ENCODE measurements at regions of chr2 and their contacts with region 1.

Region 1: GRCh38 chr2:216195565-216196029 is 86.4 kb downstream of the XRCC5 start:
- DNase-seq: no peak
- H3K4me3 Mint-ChIP-seq: peak overlapping the region; percentile 32
- H3K27ac Mint-ChIP-seq: peak overlapping the region; percentile 91
- H3K4me1 Mint-ChIP-seq: peaks cover 40% of the 10 kb centered on the region
- H3K27me3 Mint-ChIP-seq: no peaks in the 10 kb centered on the region

Region 2: DNA sequence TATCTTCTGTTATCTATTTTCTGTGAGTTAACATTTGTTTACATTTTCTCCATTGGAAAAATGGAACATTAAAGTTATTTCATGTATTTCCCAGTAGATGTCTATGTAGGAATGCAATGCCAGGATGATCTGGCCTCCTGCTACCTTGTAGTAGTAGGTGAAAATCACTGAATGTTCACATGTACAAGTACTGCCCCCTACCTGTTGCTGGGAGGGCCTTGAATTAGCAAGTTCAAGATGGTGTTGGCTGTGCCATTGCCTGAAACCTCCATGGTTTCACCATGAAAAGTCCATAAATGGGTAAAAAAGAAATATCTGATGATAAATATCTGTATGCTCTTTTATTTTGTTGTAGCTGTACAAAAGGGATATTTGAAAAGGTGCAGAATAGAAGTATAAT is 55.7 kb before region 1 on chr2:
- intact Hi-C with region 1: loop called (anchors 5 kb)
- DNase-seq: peak; percentile 80
- H3K4me3 Mint-ChIP-seq: no peak overlapping the region
- H3K27ac Mint-ChIP-seq: peak overlapping the region; percentile 46
- H3K4me1 Mint-ChIP-seq: peaks cover 31% of the 10 kb centered on the region
- H3K27me3 Mint-ChIP-seq: no peaks in the 10 kb centered on the region

Region 3: DNA sequence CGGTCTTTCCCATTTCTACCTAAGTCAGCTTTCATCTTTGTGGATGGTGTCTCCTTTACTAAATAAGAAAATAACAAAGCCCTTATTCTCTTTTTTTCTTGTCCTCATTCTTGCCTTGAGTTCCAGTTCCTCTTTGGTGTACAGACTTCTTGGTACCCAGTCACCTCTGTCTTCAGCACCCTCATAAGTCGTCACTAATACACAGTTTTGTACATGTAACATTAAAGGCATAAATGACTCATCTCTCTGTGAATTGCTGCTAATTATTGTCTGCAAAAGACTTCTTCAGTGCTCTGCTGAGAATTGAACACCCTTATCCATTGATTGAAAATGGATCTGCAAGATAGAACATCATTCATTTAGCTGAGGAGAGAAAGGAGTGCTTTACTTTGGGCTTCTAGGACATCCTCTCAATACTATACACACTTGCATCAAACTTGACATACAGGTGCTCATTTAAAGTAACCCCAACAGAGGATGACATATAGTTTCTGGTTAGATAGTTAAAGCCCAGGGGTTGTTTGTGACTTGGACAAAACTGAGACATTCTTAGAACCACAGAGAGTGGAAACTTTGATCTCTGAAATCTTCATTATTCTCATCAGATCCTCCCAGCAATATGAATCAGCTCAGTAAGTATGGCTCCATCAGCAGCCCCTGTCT is 10.6 kb after region 1 on chr2:
- intact Hi-C with region 1: loop called (anchors 1 kb)
- DNase-seq: peak; percentile 50
- H3K4me3 Mint-ChIP-seq: peak overlapping the region; percentile 32
- H3K27ac Mint-ChIP-seq: peak overlapping the region; percentile 89
- H3K4me1 Mint-ChIP-seq: peaks cover 44% of the 10 kb centered on the region
- H3K27me3 Mint-ChIP-seq: no peaks in the 10 kb centered on the region

Measured in activated CD4-positive, alpha-beta T cell treated with anti-CD3 and anti-CD28 coated beads, Interleukin-2, amount 10 ng/mL, durations not matched to agents 24 days and 14 days (primary cell).